Pancreas (tissue), 10 donors: ENCODE measurements at regions of chr5 and their contacts with region 1.

Region 1: GRCh38 chr5:95655575-95655974 is 9.0 kb downstream of the RFESD start:
- DNase-seq: no peak
- ATAC-seq: no peak
- H3K4me3 ChIP-seq: no peak overlapping the region
- H3K27ac ChIP-seq: no peak overlapping the region
- H3K4me1 ChIP-seq: peaks cover 0 to under 1% (median 0%) of the 10 kb centered on the region in 3 donors
- H3K27me3 ChIP-seq: no peaks in the 10 kb centered on the region
- CTCF ChIP-seq: no peak

Region 2: GRCh38 chr5:95572016-95572415 is 83.6 kb before region 1 on chr5:
- intact Hi-C with region 1: no loop called
- DNase-seq: no peak
- ATAC-seq: no peak
- H3K4me3 ChIP-seq: no peak overlapping the region
- H3K27ac ChIP-seq: no peak overlapping the region
- H3K4me1 ChIP-seq: no peaks in the 10 kb centered on the region
- H3K27me3 ChIP-seq: no peaks in the 10 kb centered on the region
- CTCF ChIP-seq: no peak

Region 3: GRCh38 chr5:95697781-95698681 is 42.5 kb after region 1 on chr5:
- intact Hi-C with region 1: no loop called
- DNase-seq: no peak
- ATAC-seq: no peak
- H3K4me3 ChIP-seq: no peak overlapping the region
- H3K27ac ChIP-seq: no peak overlapping the region
- H3K4me1 ChIP-seq: no peaks in the 10 kb centered on the region
- H3K27me3 ChIP-seq: no peaks in the 10 kb centered on the region
- CTCF ChIP-seq: no peak

Region 4: GRCh38 chr5:95712347-95712958 is 56.9 kb after region 1 on chr5:
- intact Hi-C with region 1: no loop called
- DNase-seq: no peak
- ATAC-seq: no peak
- H3K4me3 ChIP-seq: no peak overlapping the region
- H3K27ac ChIP-seq: no peak overlapping the region
- H3K4me1 ChIP-seq: peaks cover 0 to 6% (median 0%) of the 10 kb centered on the region in 3 donors
- H3K27me3 ChIP-seq: no peaks in the 10 kb centered on the region
- CTCF ChIP-seq: no peak

Region 5: GRCh38 chr5:95773335-95774059 is 117.9 kb after region 1 on chr5:
- intact Hi-C with region 1: loop called in 1 of 3 experiments (anchors 10 kb)
- DNase-seq: peak in 1 of 6 donors; percentile 40
- ATAC-seq: no peak
- H3K4me3 ChIP-seq: no peak overlapping the region
- H3K27ac ChIP-seq: peak overlapping the region in 1 of 4 donors; percentile 2
- H3K4me1 ChIP-seq: peaks cover 0 to 14% (median 5%) of the 10 kb centered on the region in 3 donors
- H3K27me3 ChIP-seq: no peaks in the 10 kb centered on the region
- CTCF ChIP-seq: no peak

Region 6: DNA sequence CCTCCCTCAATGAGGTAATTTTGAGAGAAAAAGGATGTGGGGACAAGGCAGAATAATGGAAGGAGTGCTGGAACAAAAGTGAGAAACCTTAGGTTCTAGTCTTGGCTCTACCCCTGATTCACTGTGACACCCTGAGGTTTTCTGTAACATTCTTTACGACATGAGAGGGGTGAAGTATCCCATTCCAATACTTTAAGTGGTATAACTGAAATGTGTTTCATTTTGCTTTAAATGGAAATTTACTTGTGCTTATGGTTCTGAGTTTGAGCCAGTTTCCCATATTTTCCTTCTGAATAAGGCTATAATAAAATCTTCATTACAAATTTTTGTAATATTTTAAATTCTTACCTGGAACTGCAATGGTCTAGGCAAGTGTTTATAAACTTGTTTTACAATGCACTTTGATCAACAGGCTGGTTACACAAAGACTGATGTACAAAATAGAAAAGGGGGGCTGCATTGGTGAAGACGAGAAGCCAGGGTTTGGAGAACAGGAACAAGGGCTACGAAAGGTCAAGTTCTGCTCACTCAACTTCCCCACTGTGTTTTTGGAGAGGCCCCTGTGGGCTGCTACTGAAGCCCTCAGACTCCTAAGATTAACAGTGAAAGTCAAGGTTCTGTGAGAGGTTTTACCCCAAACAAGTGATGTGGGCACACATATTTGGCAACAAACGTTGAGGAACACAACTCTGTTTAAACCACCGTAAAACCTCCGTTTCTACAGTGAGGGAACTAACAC is 477.9 kb after region 1 on chr5:
- intact Hi-C with region 1: no loop called
- DNase-seq: no peak
- ATAC-seq: no peak
- H3K4me3 ChIP-seq: no peak overlapping the region
- H3K27ac ChIP-seq: no peak overlapping the region
- H3K4me1 ChIP-seq: peaks cover 0 to 5% (median 0%) of the 10 kb centered on the region in 3 donors
- H3K27me3 ChIP-seq: no peaks in the 10 kb centered on the region
- CTCF ChIP-seq: no peak